OCI-LY7 (cell line): ENCODE measurements at regions of chr9 and their contacts with region 1.

Region 1: DNA sequence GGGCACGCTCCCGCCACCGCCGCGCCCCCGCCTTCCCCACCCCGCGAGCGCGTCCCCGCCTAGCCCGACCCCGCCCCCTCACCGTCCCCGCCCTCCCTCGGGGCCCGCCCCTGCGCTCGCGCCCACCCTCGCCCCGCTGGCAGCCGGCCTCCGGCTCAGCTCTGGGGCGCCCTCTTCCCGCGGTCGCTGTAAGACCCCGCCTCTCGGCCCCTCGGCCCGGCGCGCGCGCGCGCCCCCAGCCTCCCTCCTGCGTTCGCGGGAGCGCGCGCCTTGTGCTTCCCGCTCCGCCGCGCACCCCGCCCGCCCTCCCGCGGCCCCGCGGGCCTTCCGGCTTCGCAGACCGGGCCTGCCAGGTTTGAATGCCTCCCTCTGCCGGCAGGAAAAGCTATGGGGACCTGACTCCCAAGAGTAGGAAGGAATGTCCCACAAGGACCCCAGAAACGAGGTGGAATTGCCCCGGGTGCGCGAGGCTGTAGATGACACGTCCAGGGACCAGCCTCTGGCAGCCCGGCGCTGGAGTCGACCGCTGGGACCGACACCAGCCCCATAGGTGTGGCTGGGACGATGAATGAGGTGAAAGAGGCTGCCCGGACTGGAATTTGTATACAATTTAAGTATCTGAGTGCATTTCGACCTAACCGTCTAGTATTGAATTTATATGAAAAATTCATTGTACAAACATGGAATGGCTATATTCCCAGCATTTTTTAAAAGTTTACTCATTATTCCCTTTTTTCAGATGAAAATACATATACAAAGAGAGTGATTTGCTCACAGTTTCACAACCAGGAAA is 416 bp upstream of the PTBP3 start:
- DNase-seq: peak; percentile 98
- H3K4me3 ChIP-seq: peak overlapping the region; percentile 86
- H3K27ac ChIP-seq: peak overlapping the region; percentile 91
- H3K4me1 ChIP-seq: peaks cover 23% of the 10 kb centered on the region
- CTCF ChIP-seq: peak; percentile 52

Region 2: GRCh38 chr9:111631071-111631971 is 702.5 kb before region 1 on chr9 and contains the start of gene DNAJC25:
- CTCF ChIA-PET with region 1: no interaction called
- POLR2A ChIA-PET with region 1: no interaction called
- intact Hi-C with region 1: loop called (anchors 2 kb)
- DNase-seq: peak; percentile 99
- H3K4me3 ChIP-seq: peak within 1 kb of the TSS; percentile 88
- H3K27ac ChIP-seq: peak within 1 kb of the TSS; percentile 59
- H3K4me1 ChIP-seq: peaks cover 26% of the 10 kb centered on the region
- CTCF ChIP-seq: no peak
- total RNA-seq, gene DNAJC25: 4.9 and 5.8 TPM in 2 replicates

Region 3: GRCh38 chr9:112097712-112098688 is 235.8 kb before region 1 on chr9:
- CTCF ChIA-PET with region 1: no interaction called
- POLR2A ChIA-PET with region 1: no interaction called
- intact Hi-C with region 1: loop called (anchors 1 kb)
- DNase-seq: peak; percentile 80
- H3K4me3 ChIP-seq: no peak overlapping the region
- H3K27ac ChIP-seq: no peak overlapping the region
- H3K4me1 ChIP-seq: no peaks in the 10 kb centered on the region
- CTCF ChIP-seq: peak; percentile 89

Region 4: DNA sequence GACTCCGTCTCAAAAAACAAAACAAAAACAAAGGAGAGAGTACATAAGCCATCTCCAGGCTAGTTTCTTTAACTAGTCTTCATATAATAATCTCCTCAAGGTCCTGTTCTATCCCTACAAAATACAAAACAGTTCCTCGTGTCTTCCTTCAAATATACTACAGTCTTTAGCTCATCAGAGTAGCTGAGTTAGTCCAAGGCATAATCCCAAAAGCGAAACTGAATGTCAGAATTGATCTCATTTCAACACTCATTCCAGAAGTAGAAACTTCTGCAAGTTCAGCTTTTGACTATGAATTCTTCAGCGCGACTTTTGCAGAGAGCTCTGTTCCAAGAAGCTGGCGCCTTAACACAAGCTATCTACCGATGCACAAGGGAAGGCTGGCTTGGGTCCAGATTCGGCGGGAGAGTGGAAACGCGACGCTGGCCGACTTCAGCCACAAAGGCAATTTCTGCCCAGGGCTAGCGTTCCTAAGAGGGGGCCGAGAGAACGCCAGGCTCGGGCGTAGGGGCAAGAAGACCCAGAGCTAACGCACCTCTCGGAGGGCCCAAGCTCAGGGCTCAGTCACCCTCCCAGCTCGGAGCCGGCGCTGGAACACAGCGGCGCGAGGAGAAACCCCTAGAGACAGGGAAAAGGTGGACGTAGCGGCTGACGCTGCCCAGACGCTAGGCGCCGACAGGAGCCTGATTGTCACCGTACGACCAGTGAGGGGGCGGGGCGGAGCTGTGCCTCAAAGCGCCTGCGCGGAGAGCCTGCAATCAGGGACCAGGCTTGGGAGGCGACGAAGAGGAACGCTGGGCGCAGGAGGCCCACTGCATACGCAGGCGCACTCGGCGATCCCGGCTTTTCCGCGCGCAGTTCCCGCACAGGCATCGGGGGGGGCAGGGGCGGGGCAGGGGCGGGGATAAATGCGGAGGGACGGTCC is 45.6 kb after region 1 on chr9:
- CTCF ChIA-PET with region 1: no interaction called
- POLR2A ChIA-PET with region 1: interaction called, 4 read pairs
- intact Hi-C with region 1: loop called (anchors 2 kb)
- DNase-seq: peak; percentile 97
- H3K4me3 ChIP-seq: peak overlapping the region; percentile 90
- H3K27ac ChIP-seq: peak overlapping the region; percentile 51
- H3K4me1 ChIP-seq: peaks cover 42% of the 10 kb centered on the region
- CTCF ChIP-seq: no peak

Region 5: GRCh38 chr9:112717661-112718341 is 384.0 kb after region 1 on chr9 and contains the start of gene INIP:
- CTCF ChIA-PET with region 1: no interaction called
- POLR2A ChIA-PET with region 1: no interaction called
- intact Hi-C with region 1: loop called (anchors 5 kb)
- DNase-seq: peak; percentile 99
- H3K4me3 ChIP-seq: peak within 1 kb of the TSS; percentile 86
- H3K27ac ChIP-seq: peak within 1 kb of the TSS; percentile 83
- H3K4me1 ChIP-seq: peaks cover 16% of the 10 kb centered on the region
- CTCF ChIP-seq: peak; percentile 59
- total RNA-seq, gene INIP: 23.2 and 27.0 TPM in 2 replicates